Caco-2 (cell line): ENCODE measurements at regions of chr6 and their contacts with region 1.

Region 1: GRCh38 chr6:11595903-11596302 is 58.4 kb downstream of the TMEM170B start:
- DNase-seq: no peak
- H3K4me3 ChIP-seq: no peak overlapping the region
- H3K4me3 Mint-ChIP-seq: no peak overlapping the region
- H3K27ac Mint-ChIP-seq: peak overlapping the region; percentile 82
- H3K4me1 ChIP-seq: peaks cover 40% of the 10 kb centered on the region
- H3K4me1 Mint-ChIP-seq: peaks cover 34% of the 10 kb centered on the region
- H3K27me3 ChIP-seq: no peaks in the 10 kb centered on the region
- H3K27me3 Mint-ChIP-seq: no peaks in the 10 kb centered on the region
- CTCF ChIP-seq: peak; percentile 14 to 19

Region 2: DNA sequence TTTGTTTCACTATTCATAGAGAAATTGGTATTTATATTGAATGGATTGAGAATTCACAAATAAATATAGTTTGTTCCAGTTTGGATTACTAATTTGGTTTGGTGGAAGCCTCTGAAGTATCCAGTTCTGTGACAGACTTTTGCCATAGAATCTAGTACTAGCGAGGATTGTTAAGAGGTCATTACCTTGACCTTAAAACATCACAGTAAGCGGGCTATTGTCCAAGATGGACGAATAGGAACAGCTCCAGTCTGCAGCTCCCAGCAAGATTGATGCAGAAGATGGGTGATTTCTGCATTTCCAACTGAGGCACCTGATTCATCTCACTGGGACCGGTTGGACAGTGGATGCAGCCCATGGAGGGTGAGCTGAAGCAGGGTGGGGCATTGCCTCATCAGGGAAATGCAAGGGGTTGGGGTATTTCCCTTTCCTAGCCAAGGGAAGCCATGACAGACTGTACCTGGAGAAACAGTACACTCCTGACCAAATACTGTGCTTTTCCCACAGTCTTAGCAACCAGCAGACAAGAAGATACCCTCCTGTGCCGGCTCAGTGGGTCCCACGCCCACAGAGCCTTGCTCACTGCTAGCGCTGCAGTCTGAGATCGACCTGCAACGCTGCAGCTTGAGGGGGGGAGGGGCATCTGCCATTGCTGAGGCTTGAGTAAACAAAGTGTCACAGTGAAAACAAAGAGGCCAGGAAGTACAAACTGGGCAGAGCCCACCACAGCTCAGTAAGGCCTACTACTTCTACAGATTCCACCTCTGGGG is 297.1 kb before region 1 on chr6:
- CTCF ChIA-PET with region 1: no interaction called
- POLR2A ChIA-PET with region 1: no interaction called
- intact Hi-C with region 1: no loop called
- DNase-seq: no peak
- H3K4me3 ChIP-seq: no peak overlapping the region
- H3K4me3 Mint-ChIP-seq: no peak overlapping the region
- H3K27ac Mint-ChIP-seq: no peak overlapping the region
- H3K4me1 ChIP-seq: peaks cover 35% of the 10 kb centered on the region
- H3K4me1 Mint-ChIP-seq: peaks cover 33% of the 10 kb centered on the region
- H3K27me3 ChIP-seq: no peaks in the 10 kb centered on the region
- H3K27me3 Mint-ChIP-seq: no peaks in the 10 kb centered on the region
- CTCF ChIP-seq: no peak

Region 3: DNA sequence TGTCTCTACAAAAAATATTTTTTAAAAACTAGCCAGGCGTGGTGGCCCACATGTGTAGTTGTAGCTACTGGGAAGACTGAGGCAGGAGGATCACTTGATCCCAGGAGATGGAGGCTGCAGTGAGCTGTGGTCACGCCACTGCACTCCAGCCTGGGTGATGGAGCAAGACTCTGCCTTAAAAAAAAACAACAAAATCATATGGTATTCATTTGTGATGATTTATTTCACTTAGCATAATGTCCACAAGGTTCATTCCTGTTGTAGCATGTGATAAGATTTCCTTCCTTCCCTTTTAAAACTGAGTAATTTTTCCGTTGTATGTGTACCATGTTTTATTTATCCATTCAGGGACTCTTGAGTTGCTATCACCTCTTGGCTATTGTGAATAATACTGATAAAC is 32.1 kb before region 1 on chr6:
- CTCF ChIA-PET with region 1: no interaction called
- POLR2A ChIA-PET with region 1: no interaction called
- intact Hi-C with region 1: no loop called
- DNase-seq: no peak
- H3K4me3 ChIP-seq: no peak overlapping the region
- H3K4me3 Mint-ChIP-seq: no peak overlapping the region
- H3K27ac Mint-ChIP-seq: no peak overlapping the region
- H3K4me1 ChIP-seq: no peaks in the 10 kb centered on the region
- H3K4me1 Mint-ChIP-seq: no peaks in the 10 kb centered on the region
- H3K27me3 ChIP-seq: no peaks in the 10 kb centered on the region
- H3K27me3 Mint-ChIP-seq: no peaks in the 10 kb centered on the region
- CTCF ChIP-seq: no peak

Region 4: GRCh38 chr6:11609315-11610071 is 13.6 kb after region 1 on chr6:
- CTCF ChIA-PET with region 1: no interaction called
- POLR2A ChIA-PET with region 1: no interaction called
- intact Hi-C with region 1: loop called (anchors 1 kb)
- DNase-seq: peak; percentile 55 to 58
- H3K4me3 ChIP-seq: no peak overlapping the region
- H3K4me3 Mint-ChIP-seq: peak overlapping the region; percentile 47
- H3K27ac Mint-ChIP-seq: peak overlapping the region; percentile 87
- H3K4me1 ChIP-seq: peaks cover 64% of the 10 kb centered on the region
- H3K4me1 Mint-ChIP-seq: peaks cover 35% of the 10 kb centered on the region
- H3K27me3 ChIP-seq: no peaks in the 10 kb centered on the region
- H3K27me3 Mint-ChIP-seq: no peaks in the 10 kb centered on the region
- CTCF ChIP-seq: no peak

Region 5: DNA sequence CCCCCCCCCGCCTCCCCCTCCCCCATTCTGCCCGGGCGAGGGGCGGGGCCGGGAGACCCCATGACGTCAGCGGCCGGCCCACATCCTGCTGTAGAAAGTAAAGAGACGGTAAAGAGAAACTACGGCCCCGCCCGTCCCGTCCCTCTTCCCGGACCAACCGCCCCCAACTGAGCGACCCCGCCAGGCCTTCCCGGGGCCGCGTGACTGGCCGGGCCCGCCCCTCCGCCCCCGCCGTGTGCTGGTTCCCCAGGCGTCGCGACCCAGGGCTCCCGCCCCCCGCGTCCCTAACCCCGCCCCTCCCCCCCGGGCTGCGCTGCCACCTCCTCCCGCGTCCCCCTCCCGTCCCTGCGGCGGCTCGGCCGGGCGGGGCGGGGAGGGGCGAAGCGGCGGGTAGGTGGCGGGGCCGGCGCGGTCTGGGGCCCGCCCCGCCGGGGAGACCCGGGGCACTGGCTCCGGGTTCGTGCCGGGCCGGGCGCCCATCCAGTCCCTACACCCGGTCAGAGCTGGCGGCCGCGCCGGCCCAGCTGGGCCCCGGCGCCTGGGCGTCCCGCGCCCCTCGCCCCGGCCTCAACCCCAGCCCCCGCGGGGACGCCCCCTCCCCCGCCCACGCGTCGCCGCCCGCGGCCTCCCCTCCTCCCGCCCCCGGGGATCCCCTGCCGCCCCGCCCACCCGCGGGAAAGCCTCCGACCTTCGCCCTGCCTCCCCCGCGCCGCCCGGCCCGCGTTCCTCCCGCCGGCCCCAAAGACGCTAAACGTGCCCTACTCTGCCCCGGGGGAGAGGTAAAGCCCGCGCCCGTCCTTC is 415.6 kb after region 1 on chr6:
- CTCF ChIA-PET with region 1: no interaction called
- POLR2A ChIA-PET with region 1: no interaction called
- intact Hi-C with region 1: loop called (anchors 5 kb)
- DNase-seq: peak; percentile 95 to 97
- H3K4me3 ChIP-seq: peak overlapping the region; percentile 59
- H3K4me3 Mint-ChIP-seq: peak overlapping the region; percentile 96
- H3K27ac Mint-ChIP-seq: peak overlapping the region; percentile 95
- H3K4me1 ChIP-seq: peaks cover 26% of the 10 kb centered on the region
- H3K4me1 Mint-ChIP-seq: peaks cover 8% of the 10 kb centered on the region
- H3K27me3 ChIP-seq: no peaks in the 10 kb centered on the region
- H3K27me3 Mint-ChIP-seq: no peaks in the 10 kb centered on the region
- CTCF ChIP-seq: no peak